Caco-2 (cell line): ENCODE measurements at regions of chr2 and their contacts with region 1.

Region 1: GRCh38 chr2:43226558-43226954 is at the start of gene ZFP36L2:
- DNase-seq: peak; percentile 97 to 99
- H3K4me3 ChIP-seq: peak within 1 kb of the TSS; percentile 98
- H3K4me3 Mint-ChIP-seq: peak within 1 kb of the TSS; percentile 70
- H3K27ac Mint-ChIP-seq: peak within 1 kb of the TSS; percentile 97
- H3K4me1 ChIP-seq: peaks cover 46% of the 10 kb centered on the region
- H3K4me1 Mint-ChIP-seq: peaks cover 24% of the 10 kb centered on the region
- H3K27me3 ChIP-seq: no peaks in the 10 kb centered on the region
- H3K27me3 Mint-ChIP-seq: no peaks in the 10 kb centered on the region
- CTCF ChIP-seq: peak in 1 of 2 experiments; percentile 10
- total RNA-seq, gene ZFP36L2: 225 and 237 TPM in 2 replicates

Region 2: DNA sequence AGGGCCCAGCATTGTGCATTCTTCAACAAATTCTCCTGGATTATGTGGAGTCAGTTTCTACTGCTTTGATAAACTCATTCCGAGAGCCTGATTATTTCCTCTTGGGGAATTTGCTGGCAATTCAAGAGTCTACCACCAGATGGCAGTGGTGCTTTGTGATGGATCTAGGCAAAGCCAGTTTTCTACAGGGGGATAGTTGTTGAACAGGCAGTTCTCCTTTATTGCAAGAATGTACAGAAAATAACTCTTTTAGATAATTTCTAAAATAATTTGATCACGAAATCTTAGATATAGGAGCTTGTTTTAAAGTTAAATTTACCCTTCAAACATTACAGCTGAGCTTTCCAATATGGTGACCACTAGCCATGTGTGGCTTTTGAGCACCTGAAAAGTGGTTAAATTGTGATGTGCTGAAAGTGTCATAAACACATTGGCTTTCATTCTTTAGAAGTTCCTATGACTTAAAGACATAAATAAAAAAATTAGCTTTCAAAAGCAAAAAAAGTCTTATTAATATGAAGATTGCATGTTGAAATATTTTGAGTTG is 367.5 kb before region 1 on chr2:
- CTCF ChIA-PET with region 1: interaction called, 6 read pairs
- POLR2A ChIA-PET with region 1: no interaction called
- intact Hi-C with region 1: loop called (anchors 2 kb)
- DNase-seq: peak; percentile 75 to 85
- H3K4me3 ChIP-seq: no peak overlapping the region
- H3K4me3 Mint-ChIP-seq: no peak overlapping the region
- H3K27ac Mint-ChIP-seq: no peak overlapping the region
- H3K4me1 ChIP-seq: peaks cover 12% of the 10 kb centered on the region; the same call in 1 of the 2 replicates
- H3K4me1 Mint-ChIP-seq: peaks cover 14% of the 10 kb centered on the region
- H3K27me3 ChIP-seq: no peaks in the 10 kb centered on the region
- H3K27me3 Mint-ChIP-seq: no peaks in the 10 kb centered on the region
- CTCF ChIP-seq: peak; percentile 89 to 94

Region 3: GRCh38 chr2:43100883-43101662 is 125.5 kb before region 1 on chr2:
- CTCF ChIA-PET with region 1: no interaction called
- POLR2A ChIA-PET with region 1: interaction called, 21 read pairs
- intact Hi-C with region 1: no loop called
- DNase-seq: no peak
- H3K4me3 ChIP-seq: no peak overlapping the region
- H3K4me3 Mint-ChIP-seq: no peak overlapping the region
- H3K27ac Mint-ChIP-seq: no peak overlapping the region
- H3K4me1 ChIP-seq: peaks cover under 1% of the 10 kb centered on the region; the same call in 1 of the 2 replicates
- H3K4me1 Mint-ChIP-seq: peaks cover 6% of the 10 kb centered on the region
- H3K27me3 ChIP-seq: no peaks in the 10 kb centered on the region
- H3K27me3 Mint-ChIP-seq: no peaks in the 10 kb centered on the region
- CTCF ChIP-seq: no peak

Region 4: GRCh38 chr2:43194121-43194869 is 32.3 kb before region 1 on chr2:
- CTCF ChIA-PET with region 1: no interaction called
- POLR2A ChIA-PET with region 1: interaction called, 7 read pairs
- intact Hi-C with region 1: loop called (anchors 1 kb)
- DNase-seq: peak; percentile 97 to 98
- H3K4me3 ChIP-seq: 0 out of 2 replicates have a peak overlapping the region, but pooled peaks have one; percentile 0
- H3K4me3 Mint-ChIP-seq: peak overlapping the region; percentile 67
- H3K27ac Mint-ChIP-seq: peak overlapping the region; percentile 91
- H3K4me1 ChIP-seq: peaks cover 86% of the 10 kb centered on the region
- H3K4me1 Mint-ChIP-seq: peaks cover 60% of the 10 kb centered on the region
- H3K27me3 ChIP-seq: no peaks in the 10 kb centered on the region
- H3K27me3 Mint-ChIP-seq: no peaks in the 10 kb centered on the region
- CTCF ChIP-seq: no peak

Region 5: GRCh38 chr2:43251171-43251731 is 24.7 kb after region 1 on chr2:
- CTCF ChIA-PET with region 1: no interaction called
- POLR2A ChIA-PET with region 1: no interaction called
- intact Hi-C with region 1: no loop called
- DNase-seq: no peak
- H3K4me3 ChIP-seq: no peak overlapping the region
- H3K4me3 Mint-ChIP-seq: no peak overlapping the region
- H3K27ac Mint-ChIP-seq: no peak overlapping the region
- H3K4me1 ChIP-seq: peaks cover 3% of the 10 kb centered on the region; the same call in 1 of the 2 replicates
- H3K4me1 Mint-ChIP-seq: no peaks in the 10 kb centered on the region
- H3K27me3 ChIP-seq: no peaks in the 10 kb centered on the region
- H3K27me3 Mint-ChIP-seq: no peaks in the 10 kb centered on the region
- CTCF ChIP-seq: no peak

Region 6: GRCh38 chr2:43478411-43479086 is 252.0 kb after region 1 on chr2:
- CTCF ChIA-PET with region 1: no interaction called
- POLR2A ChIA-PET with region 1: interaction called, 12 read pairs
- intact Hi-C with region 1: loop called (anchors 2 kb)
- DNase-seq: no peak
- H3K4me3 ChIP-seq: no peak overlapping the region
- H3K4me3 Mint-ChIP-seq: no peak overlapping the region
- H3K27ac Mint-ChIP-seq: peak overlapping the region; percentile 45
- H3K4me1 ChIP-seq: peaks cover 23% of the 10 kb centered on the region
- H3K4me1 Mint-ChIP-seq: peaks cover 53% of the 10 kb centered on the region
- H3K27me3 ChIP-seq: no peaks in the 10 kb centered on the region
- H3K27me3 Mint-ChIP-seq: no peaks in the 10 kb centered on the region
- CTCF ChIP-seq: no peak